Naive thymus-derived CD4-positive, alpha-beta T cell (primary cell): ENCODE measurements at regions of chr17 and their contacts with region 1.

Region 1: GRCh38 chr17:48457080-48457836 is 27.2 kb upstream of the SKAP1 start:
- DNase-seq: peak; percentile 60 to 84 (median 76)
- ATAC-seq: peak; percentile 93
- H3K4me3 ChIP-seq: peak overlapping the region; percentile 47
- H3K4me3 Mint-ChIP-seq: peak overlapping the region; percentile 50 to 84 (median 77)
- H3K27ac ChIP-seq: no peak overlapping the region
- H3K27ac Mint-ChIP-seq: peak overlapping the region in 6 of 9 donors; percentile 28 to 76 (median 44)
- H3K4me1 ChIP-seq: peaks cover 53% of the 10 kb centered on the region in 2 donors
- H3K4me1 Mint-ChIP-seq: peaks cover 37 to 60% (median 54%) of the 10 kb centered on the region in 7 donors
- H3K27me3 ChIP-seq: no peaks in the 10 kb centered on the region
- H3K27me3 Mint-ChIP-seq: peaks cover 0 to under 1% (median 0%) of the 10 kb centered on the region in 5 donors

Region 2: DNA sequence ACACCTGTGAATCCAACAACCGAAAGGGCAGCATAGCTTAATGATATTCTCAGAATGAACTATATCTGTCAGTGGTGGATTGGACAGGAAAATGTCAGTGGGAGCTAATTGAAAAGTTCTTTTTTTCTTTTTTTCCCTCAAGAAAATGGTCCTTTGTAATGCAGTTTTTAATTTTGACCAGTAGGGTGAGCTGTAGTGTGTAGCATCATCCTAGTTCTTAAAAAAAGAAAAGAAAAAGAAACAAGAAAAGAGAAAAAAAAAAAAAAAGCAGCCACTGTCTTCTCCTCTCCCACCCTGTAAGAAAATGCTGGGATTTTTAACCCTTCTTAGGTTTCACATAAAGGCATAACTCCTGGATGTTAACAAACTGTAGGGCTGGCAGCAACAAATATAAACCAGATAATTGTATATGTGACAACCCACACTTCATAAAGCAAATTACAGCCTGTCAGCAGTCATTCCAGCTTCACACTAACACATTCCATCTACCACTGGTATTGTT is 105.4 kb before region 1 on chr17:
- CTCF ChIA-PET with region 1: interaction called, 26 read pairs
- POLR2A ChIA-PET with region 1: interaction called, 8 read pairs
- intact Hi-C with region 1: loop called (anchors 1 kb)
- DNase-seq: peak in 7 of 9 donors; percentile 17 to 58 (median 41)
- ATAC-seq: peak; percentile 72
- H3K4me3 ChIP-seq: no peak overlapping the region
- H3K4me3 Mint-ChIP-seq: no peak overlapping the region
- H3K27ac ChIP-seq: no peak overlapping the region
- H3K27ac Mint-ChIP-seq: no peak overlapping the region
- H3K4me1 ChIP-seq: peaks cover 0 to 4% of the 10 kb centered on the region in 2 donors
- H3K4me1 Mint-ChIP-seq: peaks cover 0 to 20% (median 13%) of the 10 kb centered on the region in 7 donors
- H3K27me3 ChIP-seq: no peaks in the 10 kb centered on the region
- H3K27me3 Mint-ChIP-seq: no peaks in the 10 kb centered on the region

Region 3: DNA sequence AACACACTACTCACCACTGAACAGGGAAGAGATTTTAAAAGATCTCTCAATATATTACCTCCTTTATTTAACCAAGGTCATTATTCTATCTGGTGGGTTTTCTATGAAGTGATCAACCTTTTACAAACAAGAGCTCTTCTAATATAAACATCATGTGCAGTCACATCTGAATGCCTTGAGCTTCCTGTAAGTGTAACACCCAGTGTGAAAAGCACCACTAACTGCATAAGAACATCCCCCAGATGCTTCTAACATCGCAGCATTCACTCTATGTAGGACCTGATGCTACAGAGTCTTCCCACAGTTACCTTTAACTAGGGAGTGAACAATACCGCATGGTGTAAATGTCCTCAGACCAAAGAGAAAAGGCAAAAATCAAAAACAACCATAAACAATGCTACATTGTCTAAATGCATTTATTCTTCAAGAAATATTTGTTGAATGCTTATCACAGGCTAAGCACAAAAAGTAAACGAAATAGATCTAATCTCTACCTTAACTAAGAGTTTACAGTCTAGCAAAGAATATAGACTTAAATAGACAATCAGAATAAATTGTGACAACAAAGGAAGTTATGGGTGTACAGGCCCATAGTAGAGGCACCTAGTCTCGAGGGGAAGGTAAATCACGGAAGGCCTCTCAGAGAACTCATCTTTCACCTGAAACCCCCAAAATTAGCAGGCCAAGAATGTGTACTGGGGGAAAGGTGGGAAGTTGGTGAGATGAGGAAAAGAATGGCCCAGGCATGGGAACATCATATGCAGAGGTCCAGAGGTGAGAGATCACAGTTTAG is 43.4 kb before region 1 on chr17:
- CTCF ChIA-PET with region 1: interaction called, 8 read pairs
- POLR2A ChIA-PET with region 1: interaction called, 11 read pairs
- intact Hi-C with region 1: loop called (anchors 1 to 5 kb)
- DNase-seq: peak in 5 of 9 donors; percentile 12 to 38 (median 16)
- ATAC-seq: peak; percentile 81
- H3K4me3 ChIP-seq: peak overlapping the region; percentile 9
- H3K4me3 Mint-ChIP-seq: peak overlapping the region; percentile 45 to 81 (median 72)
- H3K27ac ChIP-seq: peak overlapping the region; percentile 69
- H3K27ac Mint-ChIP-seq: peak overlapping the region; percentile 85 to 96 (median 91)
- H3K4me1 ChIP-seq: peaks cover 55 to 56% of the 10 kb centered on the region in 2 donors
- H3K4me1 Mint-ChIP-seq: peaks cover 42 to 98% (median 88%) of the 10 kb centered on the region in 7 donors
- H3K27me3 ChIP-seq: no peaks in the 10 kb centered on the region
- H3K27me3 Mint-ChIP-seq: no peaks in the 10 kb centered on the region

Region 4: GRCh38 chr17:48441231-48441711 is 16.0 kb before region 1 on chr17:
- CTCF ChIA-PET with region 1: interaction called, 7 read pairs
- POLR2A ChIA-PET with region 1: interaction called, 183 read pairs
- intact Hi-C with region 1: loop called (anchors 1 kb)
- DNase-seq: peak in 7 of 9 donors; percentile 74 to 88 (median 86)
- ATAC-seq: peak; percentile 80
- H3K4me3 ChIP-seq: peak overlapping the region; percentile 28
- H3K4me3 Mint-ChIP-seq: peak overlapping the region; percentile 61 to 86 (median 76)
- H3K27ac ChIP-seq: peak overlapping the region; percentile 63
- H3K27ac Mint-ChIP-seq: peak overlapping the region; percentile 69 to 96 (median 95)
- H3K4me1 ChIP-seq: peaks cover 93 to 95% of the 10 kb centered on the region in 2 donors
- H3K4me1 Mint-ChIP-seq: peaks cover 80 to 97% (median 94%) of the 10 kb centered on the region in 7 donors
- H3K27me3 ChIP-seq: no peaks in the 10 kb centered on the region
- H3K27me3 Mint-ChIP-seq: no peaks in the 10 kb centered on the region

Region 5: GRCh38 chr17:48483471-48484131 is 26.3 kb after region 1 on chr17:
- CTCF ChIA-PET with region 1: no interaction called
- POLR2A ChIA-PET with region 1: no interaction called
- intact Hi-C with region 1: no loop called
- DNase-seq: peak in 2 of 9 donors; percentile 6 to 53
- ATAC-seq: peak; percentile 32
- H3K4me3 ChIP-seq: no peak overlapping the region
- H3K4me3 Mint-ChIP-seq: peak overlapping the region in 1 of 10 donors; percentile 51
- H3K27ac ChIP-seq: no peak overlapping the region
- H3K27ac Mint-ChIP-seq: peak overlapping the region in 1 of 9 donors; percentile 51
- H3K4me1 ChIP-seq: no peaks in the 10 kb centered on the region
- H3K4me1 Mint-ChIP-seq: peaks cover 5 to 47% (median 8%) of the 10 kb centered on the region in 7 donors
- H3K27me3 ChIP-seq: no peaks in the 10 kb centered on the region
- H3K27me3 Mint-ChIP-seq: peaks cover 0 to 9% (median 2%) of the 10 kb centered on the region in 5 donors